Heart right ventricle (tissue), 16 donors: ENCODE measurements at regions of chr5 and their contacts with region 1.

Region 1: DNA sequence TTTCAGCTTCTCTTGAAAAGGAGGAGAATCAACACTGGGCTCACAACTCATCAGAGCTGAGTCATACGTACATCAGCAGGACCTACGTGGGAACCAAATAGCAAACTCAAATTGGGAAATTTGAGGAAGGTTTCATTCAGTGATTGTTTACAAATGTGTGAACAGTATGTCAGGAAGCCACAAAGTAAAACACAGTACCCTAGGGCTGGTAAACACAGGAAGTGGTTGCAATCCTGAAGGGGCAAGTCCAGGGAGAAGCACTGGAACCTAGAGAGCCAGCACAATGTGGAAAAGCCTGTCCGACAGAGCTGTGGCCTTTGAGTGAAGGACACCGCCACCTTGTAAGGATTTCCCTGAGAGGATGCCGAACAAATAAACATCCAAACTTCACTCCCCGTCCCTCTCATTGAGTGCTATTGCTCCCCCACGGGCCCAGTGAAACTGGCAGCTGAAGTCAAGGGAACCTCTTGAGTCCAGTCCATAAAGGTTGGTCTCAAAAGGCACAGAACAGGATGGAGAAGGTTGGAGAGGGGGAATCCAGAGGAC is 26.7 kb upstream of the RICTOR start:
- DNase-seq: no peak
- ATAC-seq: no peak
- H3K4me3 ChIP-seq: no peak overlapping the region
- H3K27ac ChIP-seq: peak overlapping the region in 1 of 10 donors; percentile 37
- H3K4me1 ChIP-seq: peaks cover 0 to 18% (median 0%) of the 10 kb centered on the region in 9 donors
- H3K27me3 ChIP-seq: no peaks in the 10 kb centered on the region
- CTCF ChIP-seq: no peak

Region 2: DNA sequence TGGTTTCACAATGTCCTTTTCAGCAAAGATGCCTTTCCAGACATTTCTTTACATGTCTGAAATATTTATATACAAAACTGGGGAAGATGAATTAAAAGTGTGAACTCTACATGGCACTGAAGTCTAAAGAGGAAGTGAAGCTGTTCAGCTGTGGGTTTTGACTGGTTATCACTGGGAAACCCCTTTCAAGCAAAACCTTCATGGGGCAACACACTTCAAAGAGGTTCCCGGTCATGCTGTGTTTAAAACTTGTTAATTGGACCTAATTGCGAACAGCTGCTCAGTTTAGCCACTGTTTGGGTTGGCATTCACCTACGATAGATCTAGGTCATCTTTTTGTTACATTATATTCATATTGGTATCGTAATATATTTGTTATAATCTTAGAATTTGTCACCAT is 1241.1 kb before region 1 on chr5:
- intact Hi-C with region 1: loop called in 1 of 10 experiments (anchors 10 kb)
- DNase-seq: no peak
- ATAC-seq: no peak
- H3K4me3 ChIP-seq: no peak overlapping the region
- H3K27ac ChIP-seq: no peak overlapping the region
- H3K4me1 ChIP-seq: no peaks in the 10 kb centered on the region
- H3K27me3 ChIP-seq: peaks cover 0 to 9% (median 0%) of the 10 kb centered on the region in 7 donors
- CTCF ChIP-seq: no peak